ENCODE measurements at regions of chr3 and their contacts with region 1.

Region 1: GRCh38 chr3:52670621-52671521 is 14.8 kb downstream of the PBRM1 start:
- DNase-seq: peak; percentile 77 to 98
- H3K4me3 ChIP-seq: peak overlapping the region; percentile 26; the same call in 1 of the 2 replicates
- H3K27ac ChIP-seq: peak overlapping the region; percentile 70
- H3K4me1 ChIP-seq: peaks cover 31% of the 10 kb centered on the region
- H3K27me3 ChIP-seq: no peaks in the 10 kb centered on the region
- CTCF ChIP-seq: no peak

Region 2: GRCh38 chr3:52317208-52318000 is 353.5 kb before region 1 on chr3:
- CTCF ChIA-PET with region 1: no interaction called
- POLR2A ChIA-PET with region 1: no interaction called
- intact Hi-C with region 1: no loop called
- DNase-seq: peak in 1 of 2 experiments; percentile 67
- H3K4me3 ChIP-seq: no peak overlapping the region
- H3K27ac ChIP-seq: no peak overlapping the region
- H3K4me1 ChIP-seq: peaks cover 26% of the 10 kb centered on the region
- H3K27me3 ChIP-seq: no peaks in the 10 kb centered on the region
- CTCF ChIP-seq: no peak

Region 3: DNA sequence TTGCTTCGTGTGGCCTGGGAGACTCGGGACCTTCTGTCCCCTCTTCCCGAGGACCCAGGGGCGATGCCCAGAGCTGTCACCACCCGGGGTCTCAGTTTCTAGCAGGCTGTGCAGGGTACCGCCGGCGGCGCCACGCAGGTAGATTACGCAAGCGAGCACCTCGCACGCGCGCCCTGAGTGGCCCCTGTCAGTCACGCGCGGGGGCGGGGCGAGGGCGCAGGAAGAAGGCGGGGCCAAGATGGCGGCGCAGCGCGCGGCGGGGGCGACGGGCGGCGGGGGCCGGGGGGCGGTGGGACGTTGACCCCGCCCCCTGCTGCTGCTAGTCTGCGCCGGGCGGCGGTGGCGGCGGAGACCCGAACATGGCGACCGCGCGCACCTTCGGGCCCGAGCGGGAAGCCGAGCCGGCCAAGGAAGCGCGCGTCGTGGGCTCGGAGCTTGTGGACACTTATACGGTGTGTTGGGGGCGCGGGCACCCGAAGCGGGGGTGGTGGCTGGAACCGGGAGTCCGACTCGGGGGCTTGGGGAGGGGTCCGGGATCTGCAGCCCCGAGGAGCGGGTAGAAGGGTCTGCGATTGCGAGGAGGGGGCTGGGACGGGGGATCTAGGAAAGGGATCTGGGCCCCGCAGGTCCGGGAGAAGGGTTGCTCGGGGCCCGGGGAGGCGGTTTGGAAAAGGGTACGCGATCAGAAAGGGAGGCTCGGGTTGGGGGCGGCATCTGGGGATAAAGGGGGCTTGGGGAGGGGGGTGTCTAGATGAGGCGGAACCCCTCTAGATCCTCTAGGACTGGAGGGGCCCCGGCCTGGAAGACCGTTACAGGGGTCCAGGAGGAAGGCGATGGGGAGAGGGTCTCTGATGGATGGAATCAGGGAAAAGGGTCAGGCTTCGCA is 215.3 kb before region 1 on chr3 and contains the start of gene NISCH:
- CTCF ChIA-PET with region 1: interaction called, 3 read pairs
- POLR2A ChIA-PET with region 1: no interaction called
- intact Hi-C with region 1: loop called (anchors 1 kb)
- DNase-seq: peak in 1 of 2 experiments; percentile 92
- H3K4me3 ChIP-seq: peak within 1 kb of the TSS; percentile 81
- H3K27ac ChIP-seq: no peak within 1 kb of the TSS
- H3K4me1 ChIP-seq: peaks cover 27% of the 10 kb centered on the region
- H3K27me3 ChIP-seq: no peaks in the 10 kb centered on the region
- CTCF ChIP-seq: no peak
- total RNA-seq, gene NISCH: 66.1 and 68.0 TPM in 2 replicates

Region 4: GRCh38 chr3:52527039-52527731 is 143.7 kb before region 1 on chr3:
- CTCF ChIA-PET with region 1: no interaction called
- POLR2A ChIA-PET with region 1: no interaction called
- intact Hi-C with region 1: loop called (anchors 2 kb)
- DNase-seq: peak in 1 of 2 experiments; percentile 52
- H3K4me3 ChIP-seq: no peak overlapping the region
- H3K27ac ChIP-seq: no peak overlapping the region
- H3K4me1 ChIP-seq: peaks cover 10% of the 10 kb centered on the region
- H3K27me3 ChIP-seq: no peaks in the 10 kb centered on the region
- CTCF ChIP-seq: no peak

Region 5: DNA sequence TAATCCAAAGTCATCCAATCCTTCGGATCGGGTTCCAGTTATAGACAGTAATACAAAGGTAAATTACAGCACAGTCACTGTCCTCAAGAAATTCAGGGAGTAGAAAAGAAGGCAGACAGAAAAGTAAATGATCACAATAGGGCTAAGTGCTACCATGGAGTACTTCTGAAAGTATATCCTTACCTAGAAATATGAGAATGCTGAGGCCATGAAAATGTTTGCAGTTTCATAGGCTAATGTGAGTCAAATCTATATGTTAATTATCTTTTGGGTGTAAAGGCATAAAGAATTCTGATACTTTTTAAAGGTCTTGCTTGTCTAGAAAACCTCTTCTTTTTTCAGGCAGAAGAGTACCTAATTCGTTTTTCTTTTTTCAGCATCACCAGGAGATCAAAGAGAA is 15.0 kb before region 1 on chr3:
- CTCF ChIA-PET with region 1: no interaction called
- POLR2A ChIA-PET with region 1: no interaction called
- intact Hi-C with region 1: no loop called
- DNase-seq: no peak
- H3K4me3 ChIP-seq: no peak overlapping the region
- H3K27ac ChIP-seq: no peak overlapping the region
- H3K4me1 ChIP-seq: no peaks in the 10 kb centered on the region
- H3K27me3 ChIP-seq: no peaks in the 10 kb centered on the region
- CTCF ChIP-seq: no peak

Region 6: DNA sequence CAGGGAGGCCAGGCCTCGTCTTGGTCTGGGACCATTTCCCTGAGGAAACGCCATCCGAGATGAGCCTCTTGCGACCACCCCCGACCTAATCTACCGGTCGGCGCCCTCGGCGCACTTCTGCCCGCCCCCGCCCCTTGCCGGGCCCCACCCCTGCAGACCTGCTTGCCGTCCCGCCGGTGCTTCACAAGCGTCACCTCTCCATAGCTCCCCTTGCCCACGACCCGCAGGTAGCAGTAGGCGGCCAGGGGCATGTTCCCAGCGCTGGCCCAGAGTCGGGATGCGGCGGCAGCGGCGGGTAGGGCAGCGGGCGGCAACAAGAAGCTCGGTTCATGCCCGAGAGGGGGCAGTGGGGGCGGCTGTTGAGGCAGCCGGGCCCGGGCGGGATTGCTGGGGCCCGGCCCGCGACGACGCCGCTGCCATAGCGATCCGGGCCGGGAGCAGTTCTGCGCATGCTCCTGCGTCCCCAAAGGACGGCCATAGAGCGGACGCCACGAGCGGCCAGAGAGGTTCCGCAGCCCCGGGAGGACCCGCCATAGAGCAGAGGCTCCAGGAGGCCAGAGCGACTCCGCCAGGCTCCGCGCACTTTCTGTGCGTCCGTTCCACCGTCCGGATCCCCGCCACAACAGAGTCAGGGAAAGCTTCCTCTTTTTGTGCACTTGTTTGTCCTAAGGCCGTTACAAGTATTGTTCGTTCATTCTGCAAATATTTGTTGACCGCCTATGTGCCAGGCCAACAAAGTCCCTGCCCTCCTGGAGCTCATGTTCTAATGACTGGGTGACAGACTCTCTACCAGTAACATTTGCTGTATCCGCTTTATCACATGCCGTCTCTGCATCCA is 99.8 kb after region 1 on chr3 and contains the start of gene NEK4:
- CTCF ChIA-PET with region 1: no interaction called
- POLR2A ChIA-PET with region 1: interaction called, 17 read pairs
- intact Hi-C with region 1: no loop called
- DNase-seq: peak; percentile 73 to 90
- H3K4me3 ChIP-seq: peak within 1 kb of the TSS; percentile 94
- H3K27ac ChIP-seq: peak within 1 kb of the TSS; percentile 53; the same call in 1 of the 2 replicates
- H3K4me1 ChIP-seq: 0 out of 2 replicates have a peak, but pooled peaks cover 9% of the 10 kb centered on the region
- H3K27me3 ChIP-seq: no peaks in the 10 kb centered on the region
- CTCF ChIP-seq: no peak
- total RNA-seq, gene NEK4: 26.3 and 36.5 TPM in 2 replicates